Activated CD8-positive, alpha-beta T cell treated with anti-CD3 and anti-CD28 coated beads, Interleukin-2, amount 10 ng/mL, durations not matched to agents 7 days and 5 days (primary cell): ENCODE measurements at regions of chr5 and their contacts with region 1.

Region 1: GRCh38 chr5:151126199-151126645 is 31.4 kb downstream of the ANXA6 start:
- DNase-seq: peak; percentile 78
- ATAC-seq: peak; percentile 67
- H3K4me3 Mint-ChIP-seq: no peak overlapping the region
- H3K27ac Mint-ChIP-seq: peak overlapping the region; percentile 88
- H3K4me1 Mint-ChIP-seq: peaks cover 43% of the 10 kb centered on the region
- H3K27me3 Mint-ChIP-seq: no peaks in the 10 kb centered on the region

Region 2: GRCh38 chr5:151051066-151051930 is 74.9 kb before region 1 on chr5:
- CTCF ChIA-PET with region 1: interaction called, 33 read pairs
- POLR2A ChIA-PET with region 1: no interaction called
- DNase-seq: peak; percentile 83
- ATAC-seq: peak; percentile 84
- H3K4me3 Mint-ChIP-seq: no peak overlapping the region
- H3K27ac Mint-ChIP-seq: peak overlapping the region; percentile 40
- H3K4me1 Mint-ChIP-seq: peaks cover 14% of the 10 kb centered on the region
- H3K27me3 Mint-ChIP-seq: no peaks in the 10 kb centered on the region

Region 3: DNA sequence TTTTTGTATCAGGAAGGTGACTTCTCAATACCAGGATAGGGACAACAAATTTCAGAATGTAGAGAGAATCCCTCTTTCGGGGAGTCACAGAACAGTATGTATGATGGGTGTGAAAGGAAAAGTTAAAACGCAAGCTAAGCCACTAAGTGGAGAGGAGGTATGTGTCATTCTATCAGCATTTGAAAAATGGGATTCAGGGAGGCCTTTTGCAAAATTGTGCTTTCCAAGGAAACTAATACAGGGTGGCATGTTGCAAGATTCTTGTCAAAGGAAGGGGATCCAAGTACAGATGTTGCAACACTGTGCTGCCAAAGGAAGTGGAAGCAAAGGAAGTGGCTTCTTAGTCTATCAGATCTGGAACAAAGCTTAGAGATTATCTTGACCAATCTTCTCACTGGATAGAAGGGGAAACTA is 32.7 kb before region 1 on chr5:
- CTCF ChIA-PET with region 1: interaction called, 21 read pairs
- POLR2A ChIA-PET with region 1: interaction called, 3 read pairs
- DNase-seq: no peak
- ATAC-seq: peak; percentile 31
- H3K4me3 Mint-ChIP-seq: peak overlapping the region; percentile 58
- H3K27ac Mint-ChIP-seq: peak overlapping the region; percentile 88
- H3K4me1 Mint-ChIP-seq: peaks cover 70% of the 10 kb centered on the region
- H3K27me3 Mint-ChIP-seq: peaks cover 7% of the 10 kb centered on the region

Region 4: GRCh38 chr5:151150471-151151262 is 24.4 kb after region 1 on chr5:
- CTCF ChIA-PET with region 1: interaction called, 172 read pairs
- POLR2A ChIA-PET with region 1: interaction called, 16 read pairs
- DNase-seq: peak; percentile 86
- ATAC-seq: peak; percentile 84
- H3K4me3 Mint-ChIP-seq: peak overlapping the region; percentile 64
- H3K27ac Mint-ChIP-seq: peak overlapping the region; percentile 92
- H3K4me1 Mint-ChIP-seq: peaks cover 93% of the 10 kb centered on the region
- H3K27me3 Mint-ChIP-seq: no peaks in the 10 kb centered on the region

Region 5: GRCh38 chr5:151213800-151214613 is 87.8 kb after region 1 on chr5:
- CTCF ChIA-PET with region 1: interaction called, 21 read pairs
- POLR2A ChIA-PET with region 1: interaction called, 6 read pairs
- DNase-seq: peak; percentile 95
- ATAC-seq: peak; percentile 88
- H3K4me3 Mint-ChIP-seq: peak overlapping the region; percentile 87
- H3K27ac Mint-ChIP-seq: peak overlapping the region; percentile 97
- H3K4me1 Mint-ChIP-seq: peaks cover 82% of the 10 kb centered on the region
- H3K27me3 Mint-ChIP-seq: no peaks in the 10 kb centered on the region

Region 6: GRCh38 chr5:151239237-151239861 is 113.1 kb after region 1 on chr5:
- CTCF ChIA-PET with region 1: interaction called, 43 read pairs
- POLR2A ChIA-PET with region 1: interaction called, 3 read pairs
- DNase-seq: peak; percentile 72
- ATAC-seq: peak; percentile 70
- H3K4me3 Mint-ChIP-seq: no peak overlapping the region
- H3K27ac Mint-ChIP-seq: no peak overlapping the region
- H3K4me1 Mint-ChIP-seq: peaks cover 46% of the 10 kb centered on the region
- H3K27me3 Mint-ChIP-seq: no peaks in the 10 kb centered on the region